ENCODE measurements at regions of chr4 and their contacts with region 1.

Region 1: DNA sequence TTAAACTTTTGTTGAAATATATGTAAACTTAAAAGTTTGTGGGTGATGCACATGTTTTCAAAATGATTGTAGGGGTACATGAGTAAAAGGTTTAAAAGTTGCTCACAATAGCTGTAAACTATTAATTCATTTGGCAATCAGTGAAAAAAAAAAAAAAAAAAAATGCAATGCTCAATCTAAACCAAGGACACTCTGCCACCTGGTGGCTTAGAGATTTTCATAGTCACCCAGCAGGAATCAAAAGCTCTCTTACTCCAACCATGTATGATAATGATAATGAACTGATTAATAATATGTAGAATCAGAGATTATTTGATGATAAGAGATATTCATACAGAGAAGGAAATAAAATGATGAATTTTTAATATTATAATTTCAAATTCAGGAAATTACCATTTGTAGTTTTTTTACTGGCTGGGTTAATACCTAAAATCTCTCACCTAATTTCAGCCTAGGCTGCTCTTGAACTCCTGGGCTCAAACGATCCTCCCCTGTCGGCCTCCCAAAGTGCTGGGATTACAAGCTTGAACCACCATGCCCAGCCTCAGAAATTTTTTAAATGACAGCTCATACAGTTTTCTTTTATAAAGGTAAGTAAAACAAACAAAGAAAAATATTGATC is 46.9 kb upstream of the SLC25A4 start:
- DNase-seq: peak; percentile 55
- ATAC-seq: no peak
- H3K4me3 ChIP-seq: no peak overlapping the region
- H3K27ac ChIP-seq: no peak overlapping the region
- H3K4me1 ChIP-seq: no peaks in the 10 kb centered on the region
- H3K27me3 ChIP-seq: peaks cover 19% of the 10 kb centered on the region; the same call in 1 of the 2 replicates
- CTCF ChIP-seq: peak; percentile 69

Region 2: DNA sequence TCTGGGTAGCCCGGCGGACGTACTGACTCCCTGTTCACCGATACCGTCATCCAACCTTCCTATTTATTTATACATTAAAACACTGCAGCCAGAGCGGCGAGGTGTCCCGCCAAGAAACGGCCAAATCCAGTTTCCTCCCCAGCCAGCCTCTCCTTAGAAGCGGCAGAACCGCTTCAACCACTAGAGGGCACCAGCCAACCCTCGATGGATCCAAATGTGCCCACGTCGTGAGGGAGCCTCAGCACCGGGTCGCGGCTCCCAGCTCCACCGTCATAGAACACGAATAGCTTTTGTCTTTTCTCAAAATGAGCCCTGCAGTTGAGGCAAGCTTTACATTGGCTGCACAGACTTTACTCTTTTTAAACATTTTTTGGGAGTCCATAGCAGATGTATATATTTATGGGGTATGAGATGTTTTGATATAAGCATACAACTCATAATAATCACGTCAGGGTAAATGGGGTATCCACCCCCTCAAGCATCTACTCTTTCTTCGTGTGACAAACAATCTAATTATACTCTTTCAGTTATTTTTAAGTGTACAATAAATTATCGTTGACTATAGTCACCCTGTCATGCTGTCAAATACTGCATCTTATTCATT is 90.8 kb before region 1 on chr4:
- CTCF ChIA-PET with region 1: no interaction called
- POLR2A ChIA-PET with region 1: no interaction called
- intact Hi-C with region 1: loop called (anchors 2 kb)
- DNase-seq: peak; percentile 87
- ATAC-seq: peak; percentile 95
- H3K4me3 ChIP-seq: peak overlapping the region; percentile 62
- H3K27ac ChIP-seq: no peak overlapping the region
- H3K4me1 ChIP-seq: peaks cover 2% of the 10 kb centered on the region; the same call in 1 of the 2 replicates
- H3K27me3 ChIP-seq: peaks cover 22% of the 10 kb centered on the region
- CTCF ChIP-seq: peak; percentile 88

Region 3: GRCh38 chr4:185039508-185040273 is 56.5 kb before region 1 on chr4:
- CTCF ChIA-PET with region 1: interaction called, 25 read pairs
- POLR2A ChIA-PET with region 1: no interaction called
- intact Hi-C with region 1: loop called (anchors 1 kb)
- DNase-seq: peak; percentile 54
- ATAC-seq: peak; percentile 86
- H3K4me3 ChIP-seq: peak overlapping the region; percentile 51; the same call in 1 of the 2 replicates
- H3K27ac ChIP-seq: no peak overlapping the region
- H3K4me1 ChIP-seq: no peaks in the 10 kb centered on the region
- H3K27me3 ChIP-seq: peaks cover 17% of the 10 kb centered on the region
- CTCF ChIP-seq: peak; percentile 77

Region 4: GRCh38 chr4:185082561-185082960 is 13.6 kb before region 1 on chr4:
- CTCF ChIA-PET with region 1: interaction called, 12 read pairs
- POLR2A ChIA-PET with region 1: no interaction called
- intact Hi-C with region 1: no loop called
- DNase-seq: peak; percentile 36
- ATAC-seq: no peak
- H3K4me3 ChIP-seq: no peak overlapping the region
- H3K27ac ChIP-seq: no peak overlapping the region
- H3K4me1 ChIP-seq: no peaks in the 10 kb centered on the region
- H3K27me3 ChIP-seq: peaks cover 35% of the 10 kb centered on the region
- CTCF ChIP-seq: no peak

Region 5: GRCh38 chr4:185112104-185112503 is 16.0 kb after region 1 on chr4:
- CTCF ChIA-PET with region 1: interaction called, 11 read pairs
- POLR2A ChIA-PET with region 1: no interaction called
- intact Hi-C with region 1: no loop called
- DNase-seq: peak; percentile 90
- ATAC-seq: peak; percentile 100
- H3K4me3 ChIP-seq: no peak overlapping the region
- H3K27ac ChIP-seq: peak overlapping the region; percentile 26; the same call in 1 of the 2 replicates
- H3K4me1 ChIP-seq: peaks cover 4% of the 10 kb centered on the region; the same call in 1 of the 2 replicates
- H3K27me3 ChIP-seq: no peaks in the 10 kb centered on the region
- CTCF ChIP-seq: no peak

Region 6: GRCh38 chr4:185134307-185134869 is 38.2 kb after region 1 on chr4:
- CTCF ChIA-PET with region 1: interaction called, 9 read pairs
- POLR2A ChIA-PET with region 1: no interaction called
- intact Hi-C with region 1: loop called (anchors 2 kb)
- DNase-seq: peak; percentile 69
- ATAC-seq: peak; percentile 70
- H3K4me3 ChIP-seq: no peak overlapping the region
- H3K27ac ChIP-seq: no peak overlapping the region
- H3K4me1 ChIP-seq: no peaks in the 10 kb centered on the region
- H3K27me3 ChIP-seq: no peaks in the 10 kb centered on the region
- CTCF ChIP-seq: peak; percentile 84